ENCODE measurements at regions of chr2 and their contacts with region 1.

Region 1: GRCh38 chr2:156341452-156342253 is 9.1 kb upstream of the NR4A2 start:
- DNase-seq: peak; percentile 94
- ATAC-seq: peak; percentile 85
- H3K4me3 ChIP-seq: peak overlapping the region; percentile 85
- H3K27ac ChIP-seq: peak overlapping the region; percentile 96
- H3K4me1 ChIP-seq: no peaks in the 10 kb centered on the region
- H3K27me3 ChIP-seq: no peaks in the 10 kb centered on the region
- CTCF ChIP-seq: no peak
- POLR2A ChIP-seq: peak; percentile 94
- RAD21 ChIP-seq: peak; percentile 18; the same call in 1 of the 2 replicates

Region 2: DNA sequence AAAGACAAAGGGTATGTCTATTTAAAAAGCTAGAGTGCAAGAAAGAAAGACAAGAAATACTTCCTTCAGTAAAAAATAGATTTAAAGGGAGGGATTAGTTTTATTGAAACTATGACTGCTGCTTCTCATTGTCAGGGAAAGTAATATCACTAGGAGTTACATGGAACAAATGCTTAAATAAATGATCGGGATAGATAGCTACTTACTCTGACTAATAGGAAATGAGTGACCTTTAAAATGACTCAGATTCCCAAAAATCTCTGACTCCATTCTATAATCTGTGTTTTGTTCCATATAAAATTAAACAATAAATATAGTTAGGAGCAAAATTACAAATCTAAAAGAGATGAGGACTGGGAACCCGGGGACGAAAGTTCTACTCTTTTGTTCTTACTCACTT is 678.4 kb before region 1 on chr2:
- CTCF ChIA-PET with region 1: no interaction called
- POLR2A ChIA-PET with region 1: no interaction called
- dilution Hi-C with region 1: no loop called
- in situ Hi-C with region 1: no loop called
- intact Hi-C with region 1: no loop called
- DNase-seq: no peak
- ATAC-seq: no peak
- H3K4me3 ChIP-seq: no peak overlapping the region
- H3K27ac ChIP-seq: no peak overlapping the region
- H3K4me1 ChIP-seq: no peaks in the 10 kb centered on the region
- H3K27me3 ChIP-seq: no peaks in the 10 kb centered on the region
- CTCF ChIP-seq: no peak
- POLR2A ChIP-seq: no peak
- RAD21 ChIP-seq: no peak

Region 3: GRCh38 chr2:156435715-156436496 is 94.3 kb after region 1 on chr2 and contains the start of gene GPD2:
- CTCF ChIA-PET with region 1: no interaction called
- POLR2A ChIA-PET with region 1: no interaction called
- dilution Hi-C with region 1: no loop called
- in situ Hi-C with region 1: no loop called
- intact Hi-C with region 1: loop called (anchors 2 kb)
- DNase-seq: peak; percentile 82
- ATAC-seq: peak; percentile 95
- H3K4me3 ChIP-seq: peak within 1 kb of the TSS; percentile 72
- H3K27ac ChIP-seq: peak within 1 kb of the TSS; percentile 96
- H3K4me1 ChIP-seq: peaks cover 17% of the 10 kb centered on the region
- H3K27me3 ChIP-seq: no peaks in the 10 kb centered on the region
- CTCF ChIP-seq: no peak
- POLR2A ChIP-seq: peak; percentile 55; the same call in 1 of the 2 replicates
- RAD21 ChIP-seq: no peak
- total RNA-seq, gene GPD2: 100 and 153 TPM in 2 replicates

Region 4: DNA sequence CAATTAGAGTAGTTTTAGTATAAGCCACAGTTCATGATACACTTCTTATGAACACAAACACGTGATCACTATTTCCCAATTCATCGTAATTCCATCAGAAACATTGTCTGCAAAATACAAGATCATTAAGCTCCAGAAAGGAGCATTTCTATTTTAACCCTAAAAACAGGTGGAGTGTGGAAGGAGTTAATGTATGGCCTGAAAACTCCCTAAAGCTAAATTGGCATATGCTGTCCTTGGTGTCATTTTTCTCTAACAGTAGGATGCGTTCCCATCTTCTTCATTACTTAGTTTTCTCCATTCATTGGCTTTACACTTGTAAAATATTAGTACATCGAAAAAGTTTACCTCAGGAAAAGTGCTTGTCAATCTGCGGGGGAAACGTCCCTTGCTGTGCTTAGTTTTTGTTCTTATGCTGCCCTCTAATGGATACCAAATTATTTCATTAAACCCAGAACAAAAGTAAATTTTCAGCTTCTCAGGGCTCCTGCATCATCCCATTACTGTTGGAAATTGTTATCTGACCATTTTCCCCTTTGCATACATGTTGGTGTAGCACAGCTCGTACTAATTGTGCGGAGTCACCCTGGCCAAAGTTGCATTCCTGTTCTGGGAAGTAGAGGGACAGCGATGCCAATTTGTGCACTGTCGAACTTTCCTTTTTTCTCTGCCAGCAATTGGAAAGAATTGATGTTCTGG is 247.9 kb after region 1 on chr2:
- CTCF ChIA-PET with region 1: no interaction called
- POLR2A ChIA-PET with region 1: no interaction called
- dilution Hi-C with region 1: no loop called
- in situ Hi-C with region 1: loop called (anchors 25 kb)
- intact Hi-C with region 1: no loop called
- DNase-seq: peak; percentile 62
- ATAC-seq: peak; percentile 74
- H3K4me3 ChIP-seq: no peak overlapping the region
- H3K27ac ChIP-seq: no peak overlapping the region
- H3K4me1 ChIP-seq: no peaks in the 10 kb centered on the region
- H3K27me3 ChIP-seq: no peaks in the 10 kb centered on the region
- CTCF ChIP-seq: peak; percentile 72
- POLR2A ChIP-seq: no peak
- RAD21 ChIP-seq: peak; percentile 85

Region 5: DNA sequence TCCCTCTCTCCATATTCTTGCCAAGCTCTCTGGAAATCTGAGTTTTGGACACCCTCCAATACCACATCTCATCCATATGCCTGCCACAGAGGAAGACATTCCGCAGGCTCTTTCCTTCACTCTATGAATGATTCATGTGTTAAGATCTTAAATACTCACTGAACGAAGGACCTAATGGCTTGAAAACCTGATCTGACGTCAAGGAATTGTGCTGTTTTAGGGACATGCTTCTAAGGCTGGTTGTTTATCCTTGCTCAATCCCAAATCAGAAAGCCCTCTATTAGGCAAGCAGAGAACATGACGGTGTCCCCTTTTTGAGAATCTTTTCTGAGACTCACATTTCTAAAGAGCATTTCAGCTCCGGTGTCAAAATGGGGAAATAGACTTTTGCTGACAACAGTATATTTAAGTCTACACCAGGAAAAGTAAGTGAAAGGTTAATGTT is 832.1 kb after region 1 on chr2:
- CTCF ChIA-PET with region 1: no interaction called
- POLR2A ChIA-PET with region 1: no interaction called
- dilution Hi-C with region 1: no loop called
- in situ Hi-C with region 1: no loop called
- intact Hi-C with region 1: loop called (anchors 2 kb)
- DNase-seq: peak; percentile 100
- ATAC-seq: peak; percentile 89
- H3K4me3 ChIP-seq: no peak overlapping the region
- H3K27ac ChIP-seq: peak overlapping the region; percentile 16; the same call in 1 of the 2 replicates
- H3K4me1 ChIP-seq: peaks cover 9% of the 10 kb centered on the region
- H3K27me3 ChIP-seq: no peaks in the 10 kb centered on the region
- CTCF ChIP-seq: no peak
- POLR2A ChIP-seq: no peak; the same call in 1 of the 2 replicates
- RAD21 ChIP-seq: 0 out of 2 replicates have a peak, but pooled peaks have one; percentile 2

Region 6: GRCh38 chr2:157245846-157246764 is 904.5 kb after region 1 on chr2:
- CTCF ChIA-PET with region 1: no interaction called
- POLR2A ChIA-PET with region 1: no interaction called
- dilution Hi-C with region 1: no loop called
- in situ Hi-C with region 1: no loop called
- intact Hi-C with region 1: loop called (anchors 5 kb)
- DNase-seq: peak; percentile 93
- ATAC-seq: peak; percentile 86
- H3K4me3 ChIP-seq: no peak overlapping the region
- H3K27ac ChIP-seq: peak overlapping the region; percentile 99
- H3K4me1 ChIP-seq: peaks cover 17% of the 10 kb centered on the region
- H3K27me3 ChIP-seq: no peaks in the 10 kb centered on the region
- CTCF ChIP-seq: no peak
- POLR2A ChIP-seq: no peak
- RAD21 ChIP-seq: no peak

Measured in IMR-90 (cell line).